HEK293T (cell line): ENCODE measurements at regions of chrX and their contacts with region 1.

Region 1: DNA sequence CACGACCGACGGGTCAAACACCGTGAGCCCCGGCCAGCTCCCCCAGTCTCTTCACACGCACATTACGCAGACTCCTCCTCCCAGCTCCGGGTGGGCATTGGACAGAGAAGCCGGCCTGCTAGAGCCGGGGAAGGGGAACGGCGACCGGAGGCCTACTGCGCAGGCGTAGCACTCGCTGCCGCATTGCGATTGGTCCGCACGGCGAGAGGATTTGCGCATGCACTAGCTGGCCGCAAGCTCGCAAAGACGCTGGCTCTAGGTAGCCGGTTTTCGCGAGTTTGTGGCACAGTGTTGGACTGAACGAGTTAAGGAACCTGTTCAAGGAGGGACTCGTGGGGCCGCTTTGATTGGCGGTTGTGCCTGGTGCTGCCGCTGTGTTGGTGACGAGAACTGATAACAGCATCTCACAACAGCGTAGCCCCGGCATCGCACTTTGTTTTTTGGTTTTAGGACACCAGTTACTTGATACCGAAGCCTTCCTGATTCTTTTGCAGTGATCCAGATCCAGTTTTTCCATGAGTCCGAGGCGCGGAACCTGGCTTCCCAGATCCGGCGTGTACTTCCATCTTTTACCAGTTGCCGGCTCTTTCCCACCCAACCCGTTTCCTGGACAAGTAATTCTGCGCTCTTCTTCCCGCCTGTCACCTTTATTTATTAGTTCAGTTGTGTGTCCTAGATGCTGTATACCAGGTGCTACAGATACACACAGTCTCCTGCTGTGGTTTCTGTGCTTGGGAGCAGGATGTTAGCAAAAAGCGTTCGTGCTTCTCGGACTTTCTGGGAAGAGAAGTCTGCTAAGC is at the start of gene AIFM1:
- DNase-seq: peak; percentile 96

Region 2: DNA sequence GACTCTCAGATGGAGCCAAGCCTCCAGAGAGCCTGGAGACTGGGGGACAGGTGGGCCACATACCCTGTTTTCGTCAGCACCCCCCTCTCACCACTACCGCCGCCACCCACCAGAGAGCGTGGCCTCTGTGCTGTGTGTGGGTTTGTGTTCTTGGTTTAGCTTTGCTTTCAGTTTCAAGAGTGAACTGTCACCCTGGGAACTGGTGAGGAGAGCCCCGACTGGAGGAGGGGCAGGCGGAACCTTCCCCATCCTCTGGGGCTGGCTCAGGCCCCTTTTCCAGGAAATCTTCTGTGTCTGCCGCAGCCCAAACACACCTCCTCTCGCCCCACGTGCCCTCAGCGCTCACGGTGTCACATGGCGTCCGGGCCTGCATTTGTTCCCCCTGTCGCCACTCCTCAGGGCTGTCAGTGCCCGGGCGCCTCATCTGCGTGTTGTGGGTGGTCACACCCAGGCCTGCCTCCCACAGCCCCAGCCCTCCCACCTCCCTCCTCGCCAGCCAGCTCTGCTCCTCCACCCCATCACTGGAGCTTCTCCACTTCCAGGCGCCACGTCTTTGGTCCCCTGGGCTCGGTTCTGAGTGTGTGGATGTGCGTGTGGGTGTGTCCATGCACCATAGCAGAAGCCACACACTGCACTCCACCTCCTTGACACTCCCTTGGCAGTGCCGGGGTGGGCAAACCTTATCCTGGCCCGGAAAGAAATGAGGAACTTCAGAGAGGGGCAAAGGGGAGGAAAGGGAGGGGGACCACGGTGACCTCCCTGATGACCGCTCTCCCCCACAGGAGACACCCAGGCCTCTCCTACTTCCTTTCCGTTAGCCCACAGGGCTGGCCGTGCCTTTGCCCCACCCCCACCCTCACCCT is 83.4 kb before region 1 on chrX:
- CTCF ChIA-PET with region 1: no interaction called
- POLR2A ChIA-PET with region 1: no interaction called
- DNase-seq: no peak

Region 3: GRCh38 chrX:130155564-130155963 is 10.3 kb before region 1 on chrX:
- CTCF ChIA-PET with region 1: no interaction called
- POLR2A ChIA-PET with region 1: interaction called, 12 read pairs
- DNase-seq: no peak

Region 4: DNA sequence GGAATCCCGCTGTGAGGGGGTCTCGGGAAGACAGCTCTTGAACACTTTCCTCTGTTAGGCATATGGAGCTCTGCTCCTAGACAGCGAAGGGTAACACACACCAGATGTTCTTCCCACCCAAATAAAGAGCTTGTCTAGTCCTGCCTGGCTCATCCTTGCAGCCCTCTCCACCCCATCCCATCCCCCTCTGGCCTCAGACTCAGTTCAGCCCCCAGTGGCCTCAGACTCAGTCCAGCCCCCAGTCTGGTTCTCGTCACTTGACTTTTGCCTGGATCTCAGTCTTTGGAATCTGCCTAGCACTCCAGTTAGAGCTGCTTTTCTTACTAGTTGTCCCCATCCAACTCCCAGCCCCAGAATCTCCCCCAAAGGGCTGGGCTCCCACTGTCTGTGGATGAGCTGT is 20.7 kb after region 1 on chrX:
- CTCF ChIA-PET with region 1: interaction called, 4 read pairs
- POLR2A ChIA-PET with region 1: interaction called, 11 read pairs
- DNase-seq: no peak